Head of caudate nucleus (tissue), 42 donors: ENCODE measurements at regions of chr9 and their contacts with region 1.

Region 1: GRCh38 chr9:15873569-15874177 is 320.8 kb downstream of the CCDC171 start:
- DNase-seq: peak in 4 of 42 donors; percentile 2 to 9 (median 5)

Region 2: GRCh38 chr9:15735083-15735974 is 138.3 kb before region 1 on chr9:
- intact Hi-C with region 1: no loop called
- DNase-seq: no peak

Region 3: GRCh38 chr9:15936306-15936921 is 62.7 kb after region 1 on chr9:
- intact Hi-C with region 1: no loop called
- DNase-seq: no peak

Region 4: GRCh38 chr9:16133556-16134227 is 260.0 kb after region 1 on chr9:
- intact Hi-C with region 1: loop called (anchors 10 kb)
- DNase-seq: peak in 39 of 42 donors; percentile 11 to 75 (median 44)